ENCODE measurements at regions of chr1 and their contacts with region 1.

Region 1: DNA sequence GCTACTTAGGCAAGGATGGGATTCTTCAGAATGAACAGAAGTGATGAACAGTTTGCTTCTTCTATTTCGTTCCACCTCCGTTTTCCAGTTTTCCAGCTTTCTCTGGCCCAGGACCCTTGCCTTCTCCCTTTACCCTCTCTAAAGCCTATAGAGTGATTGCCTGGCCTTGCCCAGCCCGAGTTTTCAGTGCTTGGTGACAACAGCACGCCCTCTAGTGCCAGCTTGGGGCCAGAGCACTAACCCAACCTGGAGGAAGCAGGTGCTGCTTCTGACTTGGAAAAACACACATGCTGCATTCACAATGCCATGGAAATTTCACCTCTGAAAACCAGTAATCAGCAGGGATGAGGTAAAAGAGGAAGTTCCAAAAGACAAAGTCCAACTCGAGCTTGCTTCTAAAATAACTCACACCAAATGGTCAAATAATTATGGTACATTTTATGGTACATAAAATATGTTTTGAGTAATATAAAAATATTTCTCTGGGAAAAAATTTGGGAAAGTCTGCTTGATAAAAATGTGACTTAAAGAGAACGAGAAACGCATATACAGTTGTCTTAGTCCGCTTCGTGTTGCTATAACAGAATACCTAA is 26.1 kb downstream of the UBE2T start:
- DNase-seq: peak; percentile 83
- H3K4me3 ChIP-seq: no peak overlapping the region
- H3K27ac ChIP-seq: no peak overlapping the region
- H3K4me1 ChIP-seq: no peaks in the 10 kb centered on the region
- H3K27me3 ChIP-seq: no peaks in the 10 kb centered on the region
- CTCF ChIP-seq: peak; percentile 79 to 92 (median 86)
- EP300 ChIP-seq: no peak
- POLR2A ChIP-seq: no peak

Region 2: GRCh38 chr1:202184750-202185460 is 130.8 kb before region 1 on chr1:
- in situ Hi-C with region 1: loop called in 2 of 4 experiments (anchors 10 to 25 kb)
- intact Hi-C with region 1: loop called (anchors 5 kb)
- DNase-seq: peak; percentile 86
- H3K4me3 ChIP-seq: no peak overlapping the region
- H3K27ac ChIP-seq: no peak overlapping the region
- H3K4me1 ChIP-seq: peaks cover 0 to 3% (median 0%) of the 10 kb centered on the region in 4 donors
- H3K27me3 ChIP-seq: no peaks in the 10 kb centered on the region
- CTCF ChIP-seq: peak; percentile 63 to 88 (median 83)
- EP300 ChIP-seq: no peak
- POLR2A ChIP-seq: no peak

Region 3: GRCh38 chr1:202200112-202200566 is 115.5 kb before region 1 on chr1:
- in situ Hi-C with region 1: loop called in 3 of 4 experiments (anchors 5 to 25 kb)
- intact Hi-C with region 1: no loop called
- DNase-seq: peak; percentile 57
- H3K4me3 ChIP-seq: no peak overlapping the region
- H3K27ac ChIP-seq: peak overlapping the region in 3 of 4 donors; percentile 46 to 76 (median 46)
- H3K4me1 ChIP-seq: peaks cover 0 to 23% (median 13%) of the 10 kb centered on the region in 4 donors
- H3K27me3 ChIP-seq: peaks cover 4% of the 10 kb centered on the region
- CTCF ChIP-seq: peak in 1 of 5 experiments; percentile 10
- EP300 ChIP-seq: no peak
- POLR2A ChIP-seq: no peak

Region 4: DNA sequence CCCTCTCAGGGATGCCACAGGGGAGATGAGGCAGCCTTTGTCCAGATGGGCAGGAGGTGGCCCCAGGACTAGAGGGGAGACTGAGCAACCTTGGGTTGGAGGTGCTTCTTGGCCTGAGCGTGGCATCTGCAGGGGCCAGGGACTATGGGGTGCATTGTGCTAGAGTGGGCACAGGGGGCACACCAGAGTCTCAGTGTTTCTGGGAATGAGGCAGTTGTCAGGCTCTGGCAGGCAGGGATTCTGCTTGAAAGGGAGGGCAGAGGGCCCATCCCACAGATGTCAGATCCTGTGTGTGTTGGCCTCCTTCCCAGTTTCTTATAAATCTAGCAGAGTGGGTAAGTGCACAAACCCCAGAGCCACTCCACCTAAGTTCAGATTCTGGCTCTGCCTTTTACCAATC is 108.4 kb before region 1 on chr1:
- in situ Hi-C with region 1: loop called in 2 of 4 experiments (anchors 5 to 10 kb)
- intact Hi-C with region 1: no loop called
- DNase-seq: no peak
- H3K4me3 ChIP-seq: no peak overlapping the region
- H3K27ac ChIP-seq: no peak overlapping the region
- H3K4me1 ChIP-seq: no peaks in the 10 kb centered on the region
- H3K27me3 ChIP-seq: peaks cover 11% of the 10 kb centered on the region
- CTCF ChIP-seq: no peak
- EP300 ChIP-seq: no peak
- POLR2A ChIP-seq: no peak

Region 5: GRCh38 chr1:202348509-202349205 is 33.0 kb after region 1 on chr1 and contains the start of gene PPP1R12B:
- in situ Hi-C with region 1: no loop called
- intact Hi-C with region 1: no loop called
- DNase-seq: peak; percentile 97
- H3K4me3 ChIP-seq: peak within 1 kb of the TSS; percentile 74 to 100 (median 90)
- H3K27ac ChIP-seq: peak within 1 kb of the TSS; percentile 90 to 95 (median 92)
- H3K4me1 ChIP-seq: peaks cover 9 to 17% (median 10%) of the 10 kb centered on the region in 4 donors
- H3K27me3 ChIP-seq: no peaks in the 10 kb centered on the region
- CTCF ChIP-seq: no peak
- EP300 ChIP-seq: no peak
- POLR2A ChIP-seq: peak; percentile 76
- total RNA-seq, gene PPP1R12B: 92.7 to 254 (median 137) TPM

Measured in transverse colon (tissue), 4 donors.